IMR-90 (cell line): ENCODE measurements at regions of chr15 and their contacts with region 1.

Region 1: GRCh38 chr15:89206908-89207331 is 14.5 kb downstream of the RLBP1 start:
- DNase-seq: peak; percentile 57
- ATAC-seq: peak; percentile 100
- H3K4me3 ChIP-seq: no peak overlapping the region
- H3K27ac ChIP-seq: no peak overlapping the region
- H3K4me1 ChIP-seq: no peaks in the 10 kb centered on the region; the same call in 1 of the 2 replicates
- H3K27me3 ChIP-seq: no peaks in the 10 kb centered on the region; the same call in 1 of the 2 replicates
- CTCF ChIP-seq: peak; percentile 92
- POLR2A ChIP-seq: no peak
- RAD21 ChIP-seq: peak; percentile 88

Region 2: DNA sequence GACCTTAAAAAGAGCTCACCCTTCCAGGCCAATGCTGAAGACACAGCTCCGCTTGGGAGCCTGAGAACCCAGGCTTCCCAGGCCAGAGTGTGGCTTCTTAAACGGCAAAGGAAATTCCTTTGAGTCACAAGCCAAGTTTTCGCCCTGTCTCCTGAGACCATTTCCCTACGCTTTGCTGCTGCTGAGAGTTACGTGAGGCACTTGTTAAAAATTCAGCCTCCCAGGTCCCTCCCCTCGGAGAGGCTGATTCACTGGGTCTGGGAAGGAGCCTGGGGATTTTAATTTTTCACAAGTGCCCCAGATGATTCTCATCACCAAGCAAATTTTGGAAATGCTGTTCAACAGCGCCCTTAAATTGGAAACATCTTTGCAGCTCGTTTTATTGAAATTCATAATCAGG is 11.1 kb before region 1 on chr15:
- CTCF ChIA-PET with region 1: interaction called, 13 read pairs
- POLR2A ChIA-PET with region 1: no interaction called
- dilution Hi-C with region 1: no loop called
- in situ Hi-C with region 1: no loop called
- intact Hi-C with region 1: no loop called
- DNase-seq: peak; percentile 49
- ATAC-seq: no peak
- H3K4me3 ChIP-seq: no peak overlapping the region
- H3K27ac ChIP-seq: no peak overlapping the region
- H3K4me1 ChIP-seq: peaks cover 9% of the 10 kb centered on the region
- H3K27me3 ChIP-seq: no peaks in the 10 kb centered on the region
- CTCF ChIP-seq: no peak
- POLR2A ChIP-seq: no peak
- RAD21 ChIP-seq: no peak

Region 3: GRCh38 chr15:89243691-89244471 is 37.0 kb after region 1 on chr15 and contains the start of gene FANCI:
- CTCF ChIA-PET with region 1: interaction called, 13 read pairs
- POLR2A ChIA-PET with region 1: no interaction called
- dilution Hi-C with region 1: no loop called
- in situ Hi-C with region 1: no loop called
- intact Hi-C with region 1: loop called (anchors 1 kb)
- DNase-seq: peak; percentile 90
- ATAC-seq: peak; percentile 99
- H3K4me3 ChIP-seq: peak within 1 kb of the TSS; percentile 87
- H3K27ac ChIP-seq: peak within 1 kb of the TSS; percentile 46
- H3K4me1 ChIP-seq: peaks cover 3% of the 10 kb centered on the region
- H3K27me3 ChIP-seq: no peaks in the 10 kb centered on the region
- CTCF ChIP-seq: peak; percentile 63
- POLR2A ChIP-seq: no peak
- RAD21 ChIP-seq: peak; percentile 53
- total RNA-seq, gene FANCI: 25.6 and 34.2 TPM in 2 replicates

Region 4: DNA sequence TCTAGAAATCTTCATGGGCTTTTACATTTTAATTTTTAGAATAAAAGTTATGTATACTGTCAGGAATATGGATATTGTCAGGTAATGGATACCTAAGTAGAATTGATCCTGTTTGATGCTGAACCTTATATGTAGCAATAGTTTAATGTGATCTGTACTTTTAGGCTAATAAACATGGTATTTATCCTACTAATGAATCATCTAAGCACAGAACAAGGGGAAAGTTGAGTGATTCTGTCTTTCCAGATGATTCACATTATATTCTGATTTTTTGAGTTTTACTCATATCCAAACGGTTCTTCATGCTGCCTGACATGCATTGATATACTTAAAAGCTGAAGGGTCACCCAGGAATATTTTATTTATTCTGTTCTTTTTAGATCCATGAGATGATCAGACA is 71.4 kb after region 1 on chr15:
- CTCF ChIA-PET with region 1: interaction called, 10 read pairs
- POLR2A ChIA-PET with region 1: no interaction called
- dilution Hi-C with region 1: no loop called
- in situ Hi-C with region 1: no loop called
- intact Hi-C with region 1: no loop called
- DNase-seq: peak; percentile 36
- ATAC-seq: peak; percentile 44; the same call in 1 of the 2 replicates
- H3K4me3 ChIP-seq: no peak overlapping the region
- H3K27ac ChIP-seq: no peak overlapping the region
- H3K4me1 ChIP-seq: no peaks in the 10 kb centered on the region
- H3K27me3 ChIP-seq: no peaks in the 10 kb centered on the region
- CTCF ChIP-seq: no peak
- POLR2A ChIP-seq: no peak
- RAD21 ChIP-seq: no peak

Region 5: GRCh38 chr15:89299896-89300295 is 93.0 kb after region 1 on chr15:
- CTCF ChIA-PET with region 1: interaction called, 27 read pairs
- POLR2A ChIA-PET with region 1: no interaction called
- dilution Hi-C with region 1: no loop called
- in situ Hi-C with region 1: no loop called
- intact Hi-C with region 1: loop called (anchors 1 kb)
- DNase-seq: peak; percentile 64
- ATAC-seq: peak; percentile 91
- H3K4me3 ChIP-seq: no peak overlapping the region
- H3K27ac ChIP-seq: no peak overlapping the region
- H3K4me1 ChIP-seq: no peaks in the 10 kb centered on the region
- H3K27me3 ChIP-seq: no peaks in the 10 kb centered on the region
- CTCF ChIP-seq: peak; percentile 54
- POLR2A ChIP-seq: no peak
- RAD21 ChIP-seq: peak; percentile 67

Region 6: DNA sequence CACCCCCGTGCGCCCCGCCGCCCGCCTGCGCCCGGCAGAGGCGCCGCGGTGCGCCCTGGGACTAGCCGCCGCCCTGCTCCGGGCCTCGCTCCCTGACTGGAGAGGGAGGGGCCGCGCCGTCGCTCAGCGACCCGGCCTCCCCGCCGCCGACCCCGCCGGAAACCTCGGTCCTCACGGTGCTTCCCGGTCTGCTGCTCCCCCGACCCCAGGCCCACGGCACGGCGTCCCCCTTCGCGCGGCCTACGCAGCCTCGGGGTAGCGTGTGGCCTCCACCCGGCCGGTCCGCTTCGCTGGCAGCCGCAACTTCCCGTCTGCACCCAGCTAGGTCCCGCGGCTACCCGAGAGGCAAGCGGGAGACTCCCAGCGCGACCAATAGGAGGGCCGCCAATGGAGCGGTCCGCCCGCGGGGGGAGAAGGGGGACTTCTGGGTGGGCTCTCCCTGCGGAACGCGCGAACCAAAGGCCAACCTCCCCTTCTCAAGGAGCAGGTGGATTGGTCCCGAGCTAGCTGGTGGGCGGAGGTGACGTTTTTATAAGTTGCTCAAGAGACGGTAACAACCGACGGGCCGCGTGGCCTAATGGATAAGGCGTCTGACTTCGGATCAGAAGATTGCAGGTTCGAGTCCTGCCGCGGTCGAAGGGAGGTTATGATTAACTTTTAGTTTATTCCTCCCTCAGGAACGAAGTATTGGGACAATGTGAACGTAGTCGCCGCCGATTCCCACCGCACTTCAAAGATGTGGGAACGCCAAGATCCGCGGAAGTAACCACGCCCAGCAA is 127.8 kb after region 1 on chr15 and contains the start of gene POLG:
- CTCF ChIA-PET with region 1: interaction called, 6 read pairs
- POLR2A ChIA-PET with region 1: no interaction called
- dilution Hi-C with region 1: no loop called
- in situ Hi-C with region 1: no loop called
- intact Hi-C with region 1: loop called (anchors 1 kb)
- DNase-seq: peak; percentile 99
- ATAC-seq: peak; percentile 93
- H3K4me3 ChIP-seq: peak within 1 kb of the TSS; percentile 59
- H3K27ac ChIP-seq: peak within 1 kb of the TSS; percentile 68
- H3K4me1 ChIP-seq: peaks cover 11% of the 10 kb centered on the region; the same call in 1 of the 2 replicates
- H3K27me3 ChIP-seq: peaks cover 6% of the 10 kb centered on the region
- CTCF ChIP-seq: no peak
- POLR2A ChIP-seq: peak; percentile 97
- RAD21 ChIP-seq: no peak
- total RNA-seq, gene POLG: 18.3 and 19.9 TPM in 2 replicates

Region 7: GRCh38 chr15:89430530-89431341 is 223.8 kb after region 1 on chr15:
- CTCF ChIA-PET with region 1: no interaction called
- POLR2A ChIA-PET with region 1: no interaction called
- dilution Hi-C with region 1: no loop called
- in situ Hi-C with region 1: no loop called
- intact Hi-C with region 1: loop called (anchors 2 kb)
- DNase-seq: peak; percentile 43
- ATAC-seq: peak; percentile 99
- H3K4me3 ChIP-seq: peak overlapping the region; percentile 42
- H3K27ac ChIP-seq: no peak overlapping the region
- H3K4me1 ChIP-seq: no peaks in the 10 kb centered on the region
- H3K27me3 ChIP-seq: peaks cover 43% of the 10 kb centered on the region
- CTCF ChIP-seq: peak; percentile 90
- POLR2A ChIP-seq: no peak
- RAD21 ChIP-seq: peak; percentile 81

Region 8: DNA sequence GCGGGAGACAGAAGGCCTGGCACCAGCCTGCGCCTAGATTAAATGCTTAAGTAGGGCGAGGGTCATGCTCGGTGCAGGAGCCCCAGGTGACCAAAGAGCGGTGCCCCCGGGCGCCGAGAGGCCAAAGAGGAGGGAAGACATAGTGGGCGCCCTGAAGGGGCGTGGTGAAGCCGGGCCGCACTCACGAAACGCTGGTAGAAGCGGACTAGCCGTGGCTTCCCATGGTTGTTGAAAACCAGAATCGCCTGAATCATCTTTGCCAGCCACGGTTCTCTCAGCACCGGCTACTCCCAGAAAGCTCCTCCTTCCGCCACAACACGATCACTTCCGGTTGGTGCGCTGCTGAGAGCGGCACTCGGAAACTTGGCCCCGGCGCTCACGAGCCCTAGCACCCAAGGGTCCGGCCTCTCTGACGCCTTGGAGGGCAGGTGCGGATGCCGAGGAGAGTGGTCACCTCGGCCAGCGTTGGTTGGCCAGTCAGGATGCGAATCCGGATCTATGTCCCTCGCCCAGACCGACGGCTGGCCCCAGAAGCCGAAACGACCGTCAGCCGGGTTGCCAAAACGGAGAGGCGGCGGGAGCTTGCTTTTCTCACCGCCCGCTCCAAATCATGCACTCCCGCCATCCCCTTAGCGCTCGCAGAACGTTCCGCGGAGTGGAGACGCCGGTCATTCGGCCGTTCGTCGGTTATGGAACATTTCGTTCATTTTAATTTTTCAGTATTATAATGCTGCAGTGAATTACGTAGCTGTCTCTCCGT is 687.0 kb after region 1 on chr15 and contains the start of gene AP3S2:
- CTCF ChIA-PET with region 1: no interaction called
- POLR2A ChIA-PET with region 1: no interaction called
- dilution Hi-C with region 1: no loop called
- in situ Hi-C with region 1: no loop called
- intact Hi-C with region 1: no loop called
- DNase-seq: peak; percentile 94
- ATAC-seq: peak; percentile 96
- H3K4me3 ChIP-seq: peak within 1 kb of the TSS; percentile 77
- H3K27ac ChIP-seq: peak within 1 kb of the TSS; percentile 74
- H3K4me1 ChIP-seq: no peaks in the 10 kb centered on the region
- H3K27me3 ChIP-seq: no peaks in the 10 kb centered on the region
- CTCF ChIP-seq: no peak
- POLR2A ChIP-seq: peak; percentile 75; the same call in 1 of the 2 replicates
- RAD21 ChIP-seq: peak; percentile 30; the same call in 1 of the 2 replicates
- total RNA-seq, gene AP3S2: 34.1 and 44.4 TPM in 2 replicates